Activated CD4-positive, alpha-beta memory T cell treated with anti-CD3 and anti-CD28 coated beads for 36 hours (primary cell): ENCODE measurements at regions of chr18 and their contacts with region 1.

Region 1: GRCh38 chr18:55477499-55477859 is 110.5 kb downstream of the TCF4 start:
- DNase-seq: peak; percentile 19
- H3K4me3 Mint-ChIP-seq: peak overlapping the region; percentile 66
- H3K27ac Mint-ChIP-seq: no peak overlapping the region
- H3K4me1 Mint-ChIP-seq: peaks cover 12% of the 10 kb centered on the region
- H3K27me3 Mint-ChIP-seq: no peaks in the 10 kb centered on the region

Region 2: GRCh38 chr18:55489034-55489986 is 11.8 kb after region 1 on chr18:
- CTCF ChIA-PET with region 1: no interaction called
- POLR2A ChIA-PET with region 1: no interaction called
- intact Hi-C with region 1: loop called (anchors 1 kb)
- DNase-seq: peak; percentile 63
- H3K4me3 Mint-ChIP-seq: no peak overlapping the region
- H3K27ac Mint-ChIP-seq: peak overlapping the region; percentile 16
- H3K4me1 Mint-ChIP-seq: peaks cover 13% of the 10 kb centered on the region
- H3K27me3 Mint-ChIP-seq: peaks cover 31% of the 10 kb centered on the region

Region 3: GRCh38 chr18:55494899-55495298 is 17.4 kb after region 1 on chr18:
- CTCF ChIA-PET with region 1: no interaction called
- POLR2A ChIA-PET with region 1: no interaction called
- intact Hi-C with region 1: loop called (anchors 2 kb)
- DNase-seq: no peak
- H3K4me3 Mint-ChIP-seq: no peak overlapping the region
- H3K27ac Mint-ChIP-seq: no peak overlapping the region
- H3K4me1 Mint-ChIP-seq: peaks cover under 1% of the 10 kb centered on the region
- H3K27me3 Mint-ChIP-seq: peaks cover 23% of the 10 kb centered on the region